ENCODE measurements at regions of chr9 and their contacts with region 1.

Region 1: GRCh38 chr9:91395553-91396471 is 27.8 kb downstream of the NFIL3 start:
- DNase-seq: peak; percentile 42
- ATAC-seq: peak; percentile 87
- H3K4me3 Mint-ChIP-seq: peak overlapping the region; percentile 4
- H3K27ac Mint-ChIP-seq: peak overlapping the region; percentile 80
- H3K4me1 Mint-ChIP-seq: peaks cover 18% of the 10 kb centered on the region
- H3K27me3 Mint-ChIP-seq: peaks cover 10% of the 10 kb centered on the region

Region 2: DNA sequence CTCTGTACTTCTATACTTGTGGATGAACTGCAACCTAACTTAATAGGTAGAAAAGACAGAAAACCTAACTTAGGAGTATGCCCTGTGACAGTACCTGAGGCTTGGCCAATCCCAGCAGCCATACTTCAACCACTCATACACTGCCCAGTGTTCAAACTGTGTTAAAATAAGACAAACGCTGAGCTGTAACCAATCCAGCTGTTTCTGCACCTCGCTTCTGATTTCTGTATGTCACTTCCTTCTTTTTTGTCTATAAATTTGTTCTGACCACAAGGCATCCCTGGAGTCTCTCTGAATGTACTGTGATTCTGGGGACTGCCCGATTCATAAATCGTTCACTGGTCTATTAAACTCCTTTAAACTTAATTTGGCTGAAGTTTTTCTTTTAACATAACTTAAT is 75.5 kb before region 1 on chr9:
- CTCF ChIA-PET with region 1: no interaction called
- POLR2A ChIA-PET with region 1: no interaction called
- intact Hi-C with region 1: no loop called
- DNase-seq: no peak
- ATAC-seq: no peak
- H3K4me3 Mint-ChIP-seq: no peak overlapping the region
- H3K27ac Mint-ChIP-seq: no peak overlapping the region
- H3K4me1 Mint-ChIP-seq: no peaks in the 10 kb centered on the region
- H3K27me3 Mint-ChIP-seq: no peaks in the 10 kb centered on the region

Region 3: DNA sequence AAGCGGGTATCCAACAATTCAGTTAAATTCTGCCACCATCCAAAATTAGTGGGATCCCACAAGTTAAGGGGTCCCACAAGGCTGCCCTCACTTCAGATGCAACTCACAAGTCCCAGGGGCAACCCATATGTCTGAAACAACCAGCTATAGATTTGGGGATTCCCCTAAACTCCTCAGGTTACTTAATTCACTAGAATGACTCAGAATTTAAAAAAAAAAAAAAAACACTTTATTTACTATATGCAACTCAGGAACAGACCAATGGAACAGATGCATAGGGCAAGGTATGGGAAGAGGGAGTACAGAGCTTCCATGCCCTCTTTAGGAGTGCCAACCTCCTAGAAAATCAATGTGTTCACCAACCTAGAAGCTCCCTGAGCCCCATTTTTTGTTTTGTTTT is 49.2 kb before region 1 on chr9:
- CTCF ChIA-PET with region 1: no interaction called
- POLR2A ChIA-PET with region 1: no interaction called
- intact Hi-C with region 1: loop called in 1 of 2 experiments (anchors 1 kb)
- DNase-seq: no peak
- ATAC-seq: peak; percentile 65
- H3K4me3 Mint-ChIP-seq: no peak overlapping the region
- H3K27ac Mint-ChIP-seq: peak overlapping the region; percentile 3
- H3K4me1 Mint-ChIP-seq: peaks cover 56% of the 10 kb centered on the region
- H3K27me3 Mint-ChIP-seq: no peaks in the 10 kb centered on the region

Region 4: DNA sequence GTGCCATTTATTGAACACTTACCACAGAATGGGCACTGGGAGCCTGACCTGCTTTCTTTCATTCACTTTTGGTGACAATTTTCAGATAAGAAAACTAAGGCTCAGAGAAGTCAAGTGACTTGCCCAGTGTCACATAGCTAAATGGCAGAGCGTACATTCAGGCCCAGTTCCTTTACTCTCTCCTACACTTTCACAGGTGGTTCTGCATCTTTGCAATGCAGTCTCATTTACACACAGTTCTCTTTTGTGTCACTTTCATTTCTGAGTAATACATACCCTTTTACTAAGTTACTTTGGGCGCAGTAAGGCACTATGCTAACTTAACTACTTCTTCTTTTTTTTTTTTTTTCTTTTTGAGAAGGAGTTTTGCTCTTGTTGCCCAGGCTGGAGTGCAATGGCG is 19.5 kb after region 1 on chr9:
- CTCF ChIA-PET with region 1: interaction called, 3 read pairs
- POLR2A ChIA-PET with region 1: no interaction called
- intact Hi-C with region 1: loop called (anchors 1 kb)
- DNase-seq: peak; percentile 49
- ATAC-seq: peak; percentile 78
- H3K4me3 Mint-ChIP-seq: peak overlapping the region; percentile 41
- H3K27ac Mint-ChIP-seq: peak overlapping the region; percentile 96
- H3K4me1 Mint-ChIP-seq: peaks cover 85% of the 10 kb centered on the region
- H3K27me3 Mint-ChIP-seq: no peaks in the 10 kb centered on the region

Region 5: GRCh38 chr9:91451519-91452270 is 55.9 kb after region 1 on chr9:
- CTCF ChIA-PET with region 1: no interaction called
- POLR2A ChIA-PET with region 1: no interaction called
- intact Hi-C with region 1: no loop called
- DNase-seq: no peak
- ATAC-seq: no peak
- H3K4me3 Mint-ChIP-seq: no peak overlapping the region
- H3K27ac Mint-ChIP-seq: no peak overlapping the region
- H3K4me1 Mint-ChIP-seq: no peaks in the 10 kb centered on the region
- H3K27me3 Mint-ChIP-seq: peaks cover 25% of the 10 kb centered on the region

Region 6: DNA sequence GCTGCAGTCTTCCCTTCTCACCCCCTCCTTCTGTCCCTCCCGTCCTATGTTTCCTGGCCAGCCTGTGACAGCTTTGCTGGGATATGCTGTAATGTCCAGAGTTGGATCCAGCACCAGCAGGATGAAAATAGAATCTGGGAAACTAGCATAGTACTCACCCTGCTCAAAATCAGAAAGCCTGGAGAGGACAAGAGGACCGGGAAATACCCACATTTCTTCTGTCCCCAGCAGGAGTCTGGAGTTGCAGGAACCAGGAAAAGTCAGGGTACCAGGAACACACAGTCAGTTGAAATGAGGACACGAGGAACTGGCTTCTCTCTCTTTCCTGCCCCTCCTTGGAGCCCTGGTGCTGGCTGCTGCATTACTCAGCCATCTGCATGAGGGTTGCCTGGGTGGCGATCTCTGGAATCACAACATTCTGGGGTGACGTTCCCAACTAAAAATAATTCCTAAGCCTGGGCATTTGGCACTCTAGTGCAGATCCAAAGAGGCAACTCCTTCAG is 87.4 kb after region 1 on chr9:
- CTCF ChIA-PET with region 1: no interaction called
- POLR2A ChIA-PET with region 1: no interaction called
- intact Hi-C with region 1: no loop called
- DNase-seq: no peak
- ATAC-seq: no peak
- H3K4me3 Mint-ChIP-seq: no peak overlapping the region
- H3K27ac Mint-ChIP-seq: no peak overlapping the region
- H3K4me1 Mint-ChIP-seq: no peaks in the 10 kb centered on the region
- H3K27me3 Mint-ChIP-seq: peaks cover 16% of the 10 kb centered on the region

Region 7: DNA sequence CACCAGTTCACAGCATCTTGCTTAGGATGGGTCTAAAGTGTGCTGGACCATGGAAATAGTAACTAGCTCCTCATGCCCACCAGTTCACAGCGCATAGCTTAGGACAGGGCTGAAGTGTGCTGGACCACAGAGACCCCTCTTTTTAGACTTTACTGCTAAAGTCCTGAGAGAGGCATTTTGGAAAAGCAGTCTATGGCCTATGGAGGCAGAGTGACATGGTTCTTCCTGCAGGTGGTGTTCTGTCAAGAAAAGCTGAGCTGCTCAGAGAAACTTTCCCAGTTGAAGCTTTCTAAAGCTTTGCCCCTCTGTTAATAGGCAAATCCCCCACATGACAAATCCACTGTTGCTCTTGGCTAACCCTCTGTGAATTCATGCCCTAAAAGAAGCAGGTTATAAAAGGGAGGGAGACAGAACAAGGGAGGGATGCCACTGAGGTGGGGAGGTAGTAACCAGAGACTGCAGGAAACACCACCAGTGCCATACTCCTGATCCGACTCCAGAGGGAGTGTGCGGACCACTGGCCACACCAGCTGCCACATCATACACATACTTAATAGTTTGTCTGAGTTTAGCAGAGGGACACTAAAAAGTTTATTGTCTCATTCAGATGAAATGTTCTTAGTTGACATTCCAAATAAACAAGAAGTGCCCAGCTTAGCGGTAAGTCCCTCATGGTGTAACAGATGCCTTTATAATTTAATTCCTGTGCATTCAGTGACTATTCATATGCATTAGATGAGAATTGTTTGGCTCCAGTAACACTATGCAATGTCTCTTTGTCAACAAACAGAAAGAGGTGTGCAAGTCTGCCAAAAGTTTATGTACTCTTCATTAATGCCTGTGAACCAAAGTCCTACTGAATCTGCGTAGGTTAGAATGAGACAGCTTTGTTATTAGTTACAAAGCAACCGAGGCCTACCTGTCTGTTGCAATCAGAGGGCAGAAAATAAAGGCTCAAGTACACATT is 264.0 kb after region 1 on chr9:
- CTCF ChIA-PET with region 1: no interaction called
- POLR2A ChIA-PET with region 1: no interaction called
- intact Hi-C with region 1: no loop called
- DNase-seq: peak; percentile 13
- ATAC-seq: no peak
- H3K4me3 Mint-ChIP-seq: no peak overlapping the region
- H3K27ac Mint-ChIP-seq: no peak overlapping the region
- H3K4me1 Mint-ChIP-seq: no peaks in the 10 kb centered on the region
- H3K27me3 Mint-ChIP-seq: peaks cover 15% of the 10 kb centered on the region

Measured in activated CD4-positive, alpha-beta T cell treated with anti-CD3 and anti-CD28 coated beads for 36 hours (primary cell).